ENCODE measurements at regions of chr9 and their contacts with region 1.

Region 1: GRCh38 chr9:757246-757881 is 84.1 kb upstream of the DMRT1 start:
- DNase-seq: no peak
- H3K4me3 ChIP-seq: no peak overlapping the region
- H3K27me3 ChIP-seq: no peaks in the 10 kb centered on the region
- CTCF ChIP-seq: peak; percentile 67

Region 2: DNA sequence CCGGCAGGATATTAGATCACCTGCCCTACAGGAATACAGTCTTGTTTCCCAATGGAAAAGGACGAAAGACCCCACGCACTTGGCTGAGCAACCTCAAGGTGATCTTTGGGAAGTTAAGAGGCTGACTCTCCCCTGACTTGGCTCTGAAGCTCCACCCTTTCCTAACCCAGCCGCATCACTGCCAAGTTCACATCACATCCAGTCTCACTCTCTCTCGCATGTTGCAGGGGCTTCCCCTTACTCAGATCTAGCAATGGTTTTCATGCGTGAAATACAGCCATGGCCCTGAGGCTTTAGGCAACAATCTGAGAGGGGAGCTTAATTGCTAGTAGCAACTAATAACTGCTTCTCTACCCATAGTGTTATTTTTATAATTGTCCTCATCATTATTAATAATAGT is 331.1 kb before region 1 on chr9:
- CTCF ChIA-PET with region 1: no interaction called
- POLR2A ChIA-PET with region 1: no interaction called
- DNase-seq: no peak
- H3K4me3 ChIP-seq: no peak overlapping the region
- H3K27me3 ChIP-seq: no peaks in the 10 kb centered on the region
- CTCF ChIP-seq: no peak

Region 3: DNA sequence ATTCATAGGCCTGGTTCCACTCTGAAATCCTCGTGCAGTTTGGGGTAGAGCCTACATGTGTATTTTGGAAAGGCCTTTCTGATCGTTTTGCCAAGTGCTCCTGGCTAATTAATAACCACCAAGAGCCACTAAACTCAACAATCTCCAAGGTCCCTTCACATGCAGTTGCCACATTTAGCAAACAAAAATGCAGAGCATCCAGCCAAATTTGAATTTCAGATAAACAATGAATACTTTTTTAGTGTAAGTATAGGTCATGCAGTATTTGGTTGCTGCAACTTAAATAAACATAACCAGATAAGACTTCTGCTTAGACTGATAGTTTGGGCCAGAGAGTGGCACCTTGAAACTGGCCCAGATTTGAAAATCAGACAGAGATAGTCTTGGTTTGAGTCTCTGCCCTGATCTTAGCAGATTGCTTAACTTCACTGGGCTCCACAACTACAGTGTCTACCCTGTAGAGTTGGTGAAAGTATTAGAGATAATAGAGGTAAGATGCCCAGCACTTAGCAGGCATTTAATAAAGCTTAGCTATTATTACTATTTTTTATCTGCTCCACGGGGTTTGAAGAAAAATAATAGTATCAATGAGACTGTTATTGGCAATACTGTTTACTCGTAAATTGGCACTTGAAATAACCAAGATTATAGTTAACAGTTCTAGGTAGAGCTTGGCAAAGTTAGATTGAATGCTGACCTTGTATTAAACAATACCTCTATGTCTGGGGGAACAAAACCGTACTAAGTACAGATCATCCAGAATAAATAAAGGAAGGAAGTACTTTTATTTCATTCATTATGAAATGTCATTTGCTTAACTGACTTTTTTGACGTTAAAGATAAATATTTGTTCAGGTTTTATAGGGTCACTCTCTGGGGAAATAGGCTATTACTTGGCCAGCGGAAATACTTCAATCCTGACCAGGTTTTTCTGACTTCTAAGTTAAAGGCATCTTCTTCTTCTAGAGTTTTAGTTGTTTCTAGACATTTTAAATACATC is 267.9 kb before region 1 on chr9:
- CTCF ChIA-PET with region 1: no interaction called
- POLR2A ChIA-PET with region 1: no interaction called
- DNase-seq: no peak
- H3K4me3 ChIP-seq: no peak overlapping the region
- H3K27me3 ChIP-seq: no peaks in the 10 kb centered on the region
- CTCF ChIP-seq: no peak

Region 4: GRCh38 chr9:693201-694091 is 63.9 kb before region 1 on chr9:
- CTCF ChIA-PET with region 1: interaction called, 13 read pairs
- POLR2A ChIA-PET with region 1: interaction called, 4 read pairs
- DNase-seq: no peak
- H3K4me3 ChIP-seq: peak overlapping the region; percentile 20; the same call in 1 of the 2 replicates
- H3K27me3 ChIP-seq: no peaks in the 10 kb centered on the region
- CTCF ChIP-seq: no peak

Region 5: DNA sequence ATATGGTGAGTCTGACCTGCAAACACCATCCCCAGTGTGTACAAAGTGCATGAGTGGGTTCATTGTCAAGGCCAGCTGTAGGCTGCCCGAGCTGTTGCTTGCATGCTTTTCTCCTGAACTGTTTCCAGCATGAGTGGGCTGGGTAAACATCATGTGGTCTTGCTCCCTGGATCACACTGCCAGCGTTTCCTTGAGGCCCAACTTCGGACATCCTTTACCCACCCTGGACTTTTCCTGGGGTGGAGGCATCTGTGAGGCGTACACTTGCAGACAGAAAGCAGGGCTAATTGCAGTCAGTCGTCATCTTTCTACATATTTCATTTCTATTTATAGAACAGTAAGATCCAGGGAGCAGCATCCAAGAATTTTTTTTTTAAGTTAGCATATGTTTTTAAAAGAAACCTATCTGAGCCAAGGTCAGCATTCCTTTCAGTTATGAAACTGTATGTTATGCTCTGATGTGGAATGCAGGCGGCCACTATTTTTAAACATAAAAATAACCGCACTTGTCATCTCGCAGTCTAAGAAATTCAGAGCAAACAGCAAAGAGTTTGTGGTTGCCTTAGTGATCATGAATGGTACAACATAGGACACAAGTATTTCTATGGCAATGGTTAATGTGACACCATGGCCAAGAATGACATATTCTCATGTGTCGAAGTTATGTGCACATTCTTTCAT is 22.4 kb before region 1 on chr9:
- CTCF ChIA-PET with region 1: no interaction called
- POLR2A ChIA-PET with region 1: no interaction called
- DNase-seq: peak; percentile 83
- H3K4me3 ChIP-seq: no peak overlapping the region
- H3K27me3 ChIP-seq: no peaks in the 10 kb centered on the region
- CTCF ChIP-seq: no peak